ENCODE measurements at regions of chr1 and their contacts with region 1.

Region 1: GRCh38 chr1:13725714-13726175 is 25.8 kb downstream of the PRDM2 start:
- DNase-seq: peak; percentile 72
- ATAC-seq: peak; percentile 32
- H3K4me3 Mint-ChIP-seq: no peak overlapping the region
- H3K27ac Mint-ChIP-seq: no peak overlapping the region
- H3K4me1 Mint-ChIP-seq: peaks cover 50% of the 10 kb centered on the region
- H3K27me3 Mint-ChIP-seq: no peaks in the 10 kb centered on the region

Region 2: GRCh38 chr1:13664451-13664850 is 61.3 kb before region 1 on chr1:
- CTCF ChIA-PET with region 1: interaction called, 41 read pairs
- POLR2A ChIA-PET with region 1: interaction called, 3 read pairs
- DNase-seq: no peak
- ATAC-seq: no peak
- H3K4me3 Mint-ChIP-seq: no peak overlapping the region
- H3K27ac Mint-ChIP-seq: no peak overlapping the region
- H3K4me1 Mint-ChIP-seq: peaks cover 5% of the 10 kb centered on the region
- H3K27me3 Mint-ChIP-seq: peaks cover 6% of the 10 kb centered on the region

Region 3: DNA sequence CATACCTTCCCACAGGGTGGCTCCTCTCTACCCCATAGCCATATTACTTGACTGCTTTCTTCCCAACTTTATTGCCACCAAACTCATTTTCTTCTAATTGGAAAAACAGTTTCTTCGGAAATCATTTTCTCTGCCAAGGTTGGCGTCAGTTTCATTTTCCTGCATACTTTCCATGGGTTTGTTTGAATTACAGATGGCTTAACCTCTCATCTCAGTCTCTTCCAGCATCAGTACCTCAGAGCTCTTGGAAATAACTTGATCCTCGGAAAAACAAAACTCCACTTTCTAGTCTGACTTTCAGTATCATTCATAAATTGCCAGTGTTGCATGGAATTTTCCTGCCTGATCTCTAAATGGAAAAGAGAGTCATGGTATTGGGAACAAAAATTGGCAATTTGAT is 46.1 kb before region 1 on chr1:
- CTCF ChIA-PET with region 1: interaction called, 10 read pairs
- POLR2A ChIA-PET with region 1: no interaction called
- DNase-seq: no peak
- ATAC-seq: no peak
- H3K4me3 Mint-ChIP-seq: no peak overlapping the region
- H3K27ac Mint-ChIP-seq: no peak overlapping the region
- H3K4me1 Mint-ChIP-seq: no peaks in the 10 kb centered on the region
- H3K27me3 Mint-ChIP-seq: peaks cover 45% of the 10 kb centered on the region

Region 4: DNA sequence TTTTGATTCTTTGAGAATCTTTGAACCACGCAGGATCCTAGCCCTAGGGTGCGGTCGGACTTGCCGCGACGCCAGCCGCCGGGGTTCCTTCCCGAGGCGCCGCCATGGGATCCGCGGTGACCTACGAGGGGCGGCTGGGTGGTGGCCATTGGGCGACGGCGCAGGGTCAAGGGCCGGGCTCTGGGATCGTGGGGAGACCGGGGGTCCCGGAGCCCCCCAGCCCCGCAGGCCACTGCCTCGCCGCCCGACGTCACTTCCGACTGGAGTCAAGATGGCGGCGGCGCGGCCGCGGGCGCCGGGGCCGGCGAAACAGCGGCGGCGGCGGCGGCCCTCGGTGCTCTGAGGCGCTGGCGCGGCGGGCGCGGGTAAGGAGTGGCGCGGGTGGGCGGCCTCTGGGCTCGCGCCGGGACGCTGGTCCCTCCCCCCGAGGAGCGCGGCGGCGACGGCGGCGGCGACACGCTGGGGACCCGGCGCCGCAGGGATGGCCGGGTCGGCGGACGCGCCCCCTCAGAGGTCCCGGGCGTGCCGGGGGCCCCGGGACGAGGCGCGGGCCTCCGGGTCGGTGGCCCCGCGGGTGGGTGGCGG is 25.7 kb before region 1 on chr1 and contains the start of gene PRDM2:
- CTCF ChIA-PET with region 1: interaction called, 148 read pairs
- POLR2A ChIA-PET with region 1: interaction called, 70 read pairs
- DNase-seq: peak; percentile 64
- ATAC-seq: peak; percentile 71
- H3K4me3 Mint-ChIP-seq: peak within 1 kb of the TSS; percentile 87
- H3K27ac Mint-ChIP-seq: peak within 1 kb of the TSS; percentile 93
- H3K4me1 Mint-ChIP-seq: peaks cover 47% of the 10 kb centered on the region
- H3K27me3 Mint-ChIP-seq: peaks cover 2% of the 10 kb centered on the region
- total RNA-seq, gene PRDM2: 49.3 to 50.4 TPM

Region 5: DNA sequence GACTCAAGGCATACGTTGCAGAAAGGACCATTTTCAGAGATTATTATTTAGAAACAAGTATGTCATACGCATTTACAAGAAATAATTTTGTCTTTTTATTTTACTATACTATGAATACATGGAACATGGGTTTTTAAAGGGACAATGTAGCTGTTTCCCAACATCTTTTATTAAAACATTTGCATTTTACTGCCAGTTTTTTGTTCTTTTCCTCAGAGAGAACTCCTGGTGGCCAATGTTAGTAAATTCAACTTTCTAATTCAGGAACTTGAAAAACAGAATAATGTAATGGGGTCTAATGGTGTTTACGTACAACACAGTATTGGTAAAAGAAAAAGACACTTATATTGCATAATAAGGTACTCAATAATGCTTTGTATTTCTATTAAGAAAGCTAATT is 10.9 kb before region 1 on chr1:
- CTCF ChIA-PET with region 1: interaction called, 27 read pairs
- POLR2A ChIA-PET with region 1: interaction called, 3 read pairs
- DNase-seq: no peak
- ATAC-seq: no peak
- H3K4me3 Mint-ChIP-seq: no peak overlapping the region
- H3K27ac Mint-ChIP-seq: no peak overlapping the region
- H3K4me1 Mint-ChIP-seq: peaks cover 4% of the 10 kb centered on the region
- H3K27me3 Mint-ChIP-seq: no peaks in the 10 kb centered on the region

Region 6: GRCh38 chr1:13748610-13749505 is 23.1 kb after region 1 on chr1:
- CTCF ChIA-PET with region 1: interaction called, 16 read pairs
- POLR2A ChIA-PET with region 1: interaction called, 18 read pairs
- DNase-seq: peak; percentile 96
- ATAC-seq: peak; percentile 95
- H3K4me3 Mint-ChIP-seq: peak overlapping the region; percentile 87
- H3K27ac Mint-ChIP-seq: peak overlapping the region; percentile 93
- H3K4me1 Mint-ChIP-seq: peaks cover 42% of the 10 kb centered on the region
- H3K27me3 Mint-ChIP-seq: no peaks in the 10 kb centered on the region

Region 7: GRCh38 chr1:13754510-13755103 is 28.9 kb after region 1 on chr1:
- CTCF ChIA-PET with region 1: interaction called, 16 read pairs
- POLR2A ChIA-PET with region 1: interaction called, 18 read pairs
- DNase-seq: no peak
- ATAC-seq: no peak
- H3K4me3 Mint-ChIP-seq: no peak overlapping the region
- H3K27ac Mint-ChIP-seq: peak overlapping the region; percentile 20
- H3K4me1 Mint-ChIP-seq: peaks cover 60% of the 10 kb centered on the region
- H3K27me3 Mint-ChIP-seq: no peaks in the 10 kb centered on the region

Region 8: GRCh38 chr1:13766592-13767564 is 41.1 kb after region 1 on chr1:
- CTCF ChIA-PET with region 1: no interaction called
- POLR2A ChIA-PET with region 1: no interaction called
- DNase-seq: no peak
- ATAC-seq: no peak
- H3K4me3 Mint-ChIP-seq: no peak overlapping the region
- H3K27ac Mint-ChIP-seq: no peak overlapping the region
- H3K4me1 Mint-ChIP-seq: peaks cover 30% of the 10 kb centered on the region
- H3K27me3 Mint-ChIP-seq: no peaks in the 10 kb centered on the region

Region 9: DNA sequence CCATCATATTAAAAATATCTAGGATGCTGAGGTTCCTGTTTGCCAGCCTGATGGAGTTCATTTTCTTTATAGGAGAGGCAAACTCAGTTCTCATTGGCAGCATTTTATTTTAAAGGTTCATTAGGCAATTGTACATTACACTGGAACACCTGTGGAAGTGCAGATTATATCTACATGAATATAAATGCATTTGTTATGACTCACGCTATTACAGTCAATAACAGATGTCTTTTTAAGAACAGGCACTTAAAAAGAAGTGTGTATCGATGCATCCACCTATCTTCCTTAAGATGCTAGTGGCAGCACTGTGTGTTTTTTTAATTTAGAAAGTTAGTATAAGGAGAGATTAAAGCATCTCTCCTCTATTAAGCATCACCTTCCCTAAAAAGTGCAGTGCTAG is 250.7 kb after region 1 on chr1:
- CTCF ChIA-PET with region 1: no interaction called
- POLR2A ChIA-PET with region 1: no interaction called
- DNase-seq: no peak
- ATAC-seq: no peak
- H3K4me3 Mint-ChIP-seq: no peak overlapping the region
- H3K27ac Mint-ChIP-seq: no peak overlapping the region
- H3K4me1 Mint-ChIP-seq: no peaks in the 10 kb centered on the region
- H3K27me3 Mint-ChIP-seq: peaks cover 3% of the 10 kb centered on the region